ENCODE measurements at regions of chr14 and their contacts with region 1.

Region 1: GRCh38 chr14:64421166-64421565 is 33.0 kb downstream of the MTHFD1 start:
- DNase-seq: no peak
- H3K4me3 Mint-ChIP-seq: no peak overlapping the region
- H3K27ac Mint-ChIP-seq: peak overlapping the region; percentile 72
- H3K4me1 Mint-ChIP-seq: peaks cover 52% of the 10 kb centered on the region
- H3K27me3 Mint-ChIP-seq: no peaks in the 10 kb centered on the region

Region 2: DNA sequence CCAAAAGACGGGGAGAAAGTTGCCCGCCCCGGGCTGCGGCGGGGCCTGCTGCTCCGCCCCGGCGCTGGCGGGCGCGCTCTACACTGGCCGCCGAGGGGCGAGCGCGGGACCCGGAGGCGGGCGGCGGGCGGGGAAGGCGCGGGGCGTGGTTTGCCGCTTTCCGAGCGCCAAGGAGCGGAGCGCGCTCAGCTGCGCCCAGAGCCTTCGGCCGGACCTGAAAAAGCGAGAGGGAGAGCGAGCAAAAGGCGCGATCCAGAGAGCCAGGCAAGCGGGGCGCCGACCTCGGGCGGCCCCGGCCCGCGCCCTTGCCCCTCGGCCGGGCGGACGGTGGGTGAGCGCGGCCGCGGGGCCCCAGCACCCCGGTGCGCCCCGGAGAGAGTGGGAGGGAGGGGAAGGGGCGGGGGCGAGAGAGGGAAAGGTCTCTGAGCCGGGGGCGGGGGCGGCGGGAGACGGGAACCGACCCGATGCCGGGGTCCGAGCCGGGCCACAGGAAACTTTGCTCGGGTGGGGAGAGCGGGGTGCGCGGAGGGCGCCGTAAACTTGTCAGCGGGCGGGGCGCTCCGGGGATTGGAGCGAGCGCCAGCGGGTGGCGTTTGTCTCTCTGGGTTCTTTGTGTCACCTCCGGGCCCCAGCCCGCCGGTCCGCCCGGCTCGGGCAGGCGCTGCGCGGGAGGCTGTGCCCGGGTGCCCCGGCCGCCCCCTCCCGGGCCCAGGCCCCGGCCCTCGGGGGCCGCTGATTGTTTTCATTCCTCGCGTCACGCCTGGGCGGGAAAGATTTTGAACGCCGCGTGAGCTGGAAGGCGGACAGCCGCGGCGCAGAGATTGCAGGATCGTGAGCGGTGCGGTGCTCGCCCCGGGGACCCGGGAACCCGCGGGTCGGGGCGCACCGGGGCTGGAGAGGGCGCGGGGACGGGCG is 568.1 kb before region 1 on chr14 and contains the start of gene SYNE2:
- intact Hi-C with region 1: loop called (anchors 10 kb)
- DNase-seq: peak; percentile 76
- H3K4me3 Mint-ChIP-seq: peak within 1 kb of the TSS; percentile 93
- H3K27ac Mint-ChIP-seq: peak within 1 kb of the TSS; percentile 89
- H3K4me1 Mint-ChIP-seq: peaks cover 38% of the 10 kb centered on the region
- H3K27me3 Mint-ChIP-seq: peaks cover 46% of the 10 kb centered on the region
- total RNA-seq, gene SYNE2: 15.2 and 16.1 TPM in 2 replicates

Region 3: GRCh38 chr14:64338616-64339316 is 82.4 kb before region 1 on chr14:
- intact Hi-C with region 1: loop called (anchors 2 kb)
- DNase-seq: peak; percentile 89
- H3K4me3 Mint-ChIP-seq: peak overlapping the region; percentile 91
- H3K27ac Mint-ChIP-seq: peak overlapping the region; percentile 80
- H3K4me1 Mint-ChIP-seq: peaks cover 23% of the 10 kb centered on the region
- H3K27me3 Mint-ChIP-seq: no peaks in the 10 kb centered on the region

Region 4: DNA sequence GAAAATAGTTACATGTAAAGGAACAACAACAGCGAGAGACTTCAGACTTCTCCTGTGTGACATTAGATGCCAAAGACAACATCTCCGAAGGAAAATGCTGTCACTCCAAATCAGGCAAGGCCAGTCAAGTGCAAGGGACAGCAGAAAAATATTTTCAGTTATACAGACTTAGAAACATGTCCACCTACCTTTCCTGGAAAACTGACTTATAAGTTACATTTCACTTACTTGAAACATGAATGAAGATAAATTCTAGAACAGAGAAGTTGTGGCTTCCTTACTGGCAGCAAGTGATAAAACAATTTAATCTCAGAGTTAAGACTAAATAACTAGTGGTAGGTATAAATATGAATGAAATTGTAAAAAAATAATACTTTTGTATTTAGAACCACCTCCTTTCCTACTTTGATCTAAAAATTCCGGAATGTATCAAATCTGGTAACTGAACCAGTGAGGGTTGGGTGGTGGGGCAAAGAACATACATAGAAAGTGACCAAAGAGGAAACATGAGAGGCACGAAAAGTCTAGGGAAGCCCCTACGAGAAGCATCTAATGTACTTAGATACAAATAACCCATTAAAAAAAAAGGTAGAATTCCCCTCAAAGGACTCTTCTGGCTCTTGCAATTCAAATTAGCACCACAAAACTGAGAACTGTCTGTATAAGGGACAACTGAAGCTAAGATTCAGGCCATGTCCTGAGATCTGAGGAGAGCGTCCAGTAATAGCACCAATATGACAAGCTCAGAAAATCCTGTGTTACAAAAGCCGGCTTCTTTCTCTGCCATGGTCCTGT is 11.8 kb before region 1 on chr14:
- intact Hi-C with region 1: loop called (anchors 2 kb)
- DNase-seq: no peak
- H3K4me3 Mint-ChIP-seq: peak overlapping the region; percentile 13
- H3K27ac Mint-ChIP-seq: peak overlapping the region; percentile 75
- H3K4me1 Mint-ChIP-seq: peaks cover 61% of the 10 kb centered on the region
- H3K27me3 Mint-ChIP-seq: no peaks in the 10 kb centered on the region

Region 5: GRCh38 chr14:64465191-64465822 is 44.1 kb after region 1 on chr14 and contains the start of gene AKAP5:
- intact Hi-C with region 1: loop called (anchors 2 kb)
- DNase-seq: peak; percentile 56
- H3K4me3 Mint-ChIP-seq: peak within 1 kb of the TSS; percentile 84
- H3K27ac Mint-ChIP-seq: peak within 1 kb of the TSS; percentile 70
- H3K4me1 Mint-ChIP-seq: peaks cover 35% of the 10 kb centered on the region
- H3K27me3 Mint-ChIP-seq: no peaks in the 10 kb centered on the region
- total RNA-seq, gene AKAP5: 2.3 and 2.5 TPM in 2 replicates

Measured in activated T-helper 2 cell treated with anti-CD3 and anti-CD28 coated beads, Interferon-gamma antibody, Interleukin-2, Interleukin-4, amounts not matched to agents 10 μg/mL and 5 μg/mL and 100 μg/mL, durations not matched to agents 14 hours and 24 hours and 36 hours (primary cell).